WTC11 (cell line): ENCODE measurements at regions of chr19 and their contacts with region 1.

Region 1: GRCh38 chr19:48290771-48291488 is 21.0 kb downstream of the ZNF114 start:
- DNase-seq: peak; percentile 88
- ATAC-seq: peak; percentile 63
- H3K4me3 Mint-ChIP-seq: peak overlapping the region; percentile 74
- H3K27ac Mint-ChIP-seq: peak overlapping the region; percentile 65; the same call in 1 of the 2 replicates
- H3K4me1 Mint-ChIP-seq: peaks cover 15% of the 10 kb centered on the region
- H3K27me3 Mint-ChIP-seq: no peaks in the 10 kb centered on the region
- CTCF ChIP-seq: peak; percentile 96

Region 2: DNA sequence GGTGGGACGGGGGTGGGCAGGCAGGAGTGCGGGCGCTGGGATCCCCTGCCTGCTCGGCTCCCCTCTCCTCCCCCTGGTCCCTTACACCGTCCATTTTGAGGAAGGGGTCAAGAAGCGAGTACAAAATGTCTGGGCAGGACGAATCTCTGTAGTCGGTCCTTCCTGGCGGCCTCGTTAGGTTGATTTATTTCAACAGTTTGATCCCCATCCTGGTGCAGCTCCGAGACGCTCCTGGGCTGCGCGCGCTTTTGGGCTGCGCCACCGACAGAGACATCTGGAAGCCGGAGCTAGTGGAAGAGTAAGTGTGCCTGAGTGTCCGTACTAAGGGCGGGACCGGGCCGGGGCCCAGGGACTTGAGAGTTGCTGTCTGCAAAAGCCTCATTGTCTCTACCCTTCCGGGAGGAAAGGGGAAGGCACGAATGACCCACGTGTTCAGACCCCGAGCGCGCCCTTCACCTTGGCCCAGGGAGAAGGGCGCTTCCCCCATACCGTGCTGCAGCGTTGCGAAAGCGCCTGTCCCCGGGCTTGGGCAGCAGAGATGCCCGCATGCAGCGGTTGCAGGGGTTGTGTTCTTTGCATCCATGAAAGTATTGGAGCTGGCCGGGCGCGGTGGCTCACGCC is 19.3 kb before region 1 on chr19:
- CTCF ChIA-PET with region 1: interaction called, 43 read pairs
- POLR2A ChIA-PET with region 1: interaction called, 6 read pairs
- DNase-seq: peak; percentile 68
- ATAC-seq: peak; percentile 76
- H3K4me3 Mint-ChIP-seq: peak overlapping the region; percentile 95
- H3K27ac Mint-ChIP-seq: peak overlapping the region; percentile 98
- H3K4me1 Mint-ChIP-seq: peaks cover 18% of the 10 kb centered on the region
- H3K27me3 Mint-ChIP-seq: no peaks in the 10 kb centered on the region; the same call in 1 of the 2 replicates
- CTCF ChIP-seq: no peak

Region 3: GRCh38 chr19:48325244-48325910 is 34.4 kb after region 1 on chr19 and contains the start of gene EMP3:
- CTCF ChIA-PET with region 1: no interaction called
- POLR2A ChIA-PET with region 1: no interaction called
- DNase-seq: peak; percentile 78
- ATAC-seq: peak; percentile 4
- H3K4me3 Mint-ChIP-seq: peak within 1 kb of the TSS; percentile 61
- H3K27ac Mint-ChIP-seq: peak within 1 kb of the TSS; percentile 14; the same call in 1 of the 2 replicates
- H3K4me1 Mint-ChIP-seq: peaks cover 50% of the 10 kb centered on the region
- H3K27me3 Mint-ChIP-seq: peaks cover 58% of the 10 kb centered on the region
- CTCF ChIP-seq: no peak
- total RNA-seq, gene EMP3: 8.9 to 11.1 TPM (median 10.4 TPM) in 3 replicates